ENCODE measurements at regions of chr19 and their contacts with region 1.

Region 1: GRCh38 chr19:55632463-55632834 is 8.1 kb upstream of the ZNF784 start:
- DNase-seq: peak; percentile 44
- ATAC-seq: peak; percentile 57
- H3K4me3 Mint-ChIP-seq: peak overlapping the region; percentile 60
- H3K27ac Mint-ChIP-seq: peak overlapping the region; percentile 37
- H3K4me1 Mint-ChIP-seq: peaks cover 40% of the 10 kb centered on the region
- H3K27me3 Mint-ChIP-seq: no peaks in the 10 kb centered on the region
- CTCF ChIP-seq: no peak

Region 2: DNA sequence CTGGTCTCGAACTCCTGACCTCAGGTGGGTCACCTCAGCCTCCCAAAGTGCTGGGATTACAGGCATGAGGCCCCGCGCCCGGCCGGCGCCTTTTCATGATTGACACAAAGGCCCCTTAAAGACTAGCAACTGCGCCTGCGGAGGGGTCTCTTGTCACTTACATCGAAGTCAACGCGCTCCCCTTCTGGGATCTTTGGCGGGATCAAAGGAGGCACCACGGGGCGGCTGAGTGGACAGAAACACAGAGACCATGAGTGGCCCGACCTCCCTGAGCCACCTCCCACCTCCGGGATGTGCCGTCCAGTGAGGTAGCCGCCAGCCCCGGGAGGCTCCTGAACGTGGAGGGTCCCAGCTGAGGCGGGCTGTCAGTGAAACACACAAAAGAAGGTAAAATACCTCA is 490.8 kb before region 1 on chr19:
- CTCF ChIA-PET with region 1: interaction called, 22 read pairs
- POLR2A ChIA-PET with region 1: interaction called, 3 read pairs
- intact Hi-C with region 1: loop called (anchors 1 kb)
- DNase-seq: no peak
- ATAC-seq: no peak
- H3K4me3 Mint-ChIP-seq: no peak overlapping the region
- H3K27ac Mint-ChIP-seq: no peak overlapping the region
- H3K4me1 Mint-ChIP-seq: peaks cover 6% of the 10 kb centered on the region
- H3K27me3 Mint-ChIP-seq: peaks cover 51% of the 10 kb centered on the region
- CTCF ChIP-seq: no peak

Region 3: DNA sequence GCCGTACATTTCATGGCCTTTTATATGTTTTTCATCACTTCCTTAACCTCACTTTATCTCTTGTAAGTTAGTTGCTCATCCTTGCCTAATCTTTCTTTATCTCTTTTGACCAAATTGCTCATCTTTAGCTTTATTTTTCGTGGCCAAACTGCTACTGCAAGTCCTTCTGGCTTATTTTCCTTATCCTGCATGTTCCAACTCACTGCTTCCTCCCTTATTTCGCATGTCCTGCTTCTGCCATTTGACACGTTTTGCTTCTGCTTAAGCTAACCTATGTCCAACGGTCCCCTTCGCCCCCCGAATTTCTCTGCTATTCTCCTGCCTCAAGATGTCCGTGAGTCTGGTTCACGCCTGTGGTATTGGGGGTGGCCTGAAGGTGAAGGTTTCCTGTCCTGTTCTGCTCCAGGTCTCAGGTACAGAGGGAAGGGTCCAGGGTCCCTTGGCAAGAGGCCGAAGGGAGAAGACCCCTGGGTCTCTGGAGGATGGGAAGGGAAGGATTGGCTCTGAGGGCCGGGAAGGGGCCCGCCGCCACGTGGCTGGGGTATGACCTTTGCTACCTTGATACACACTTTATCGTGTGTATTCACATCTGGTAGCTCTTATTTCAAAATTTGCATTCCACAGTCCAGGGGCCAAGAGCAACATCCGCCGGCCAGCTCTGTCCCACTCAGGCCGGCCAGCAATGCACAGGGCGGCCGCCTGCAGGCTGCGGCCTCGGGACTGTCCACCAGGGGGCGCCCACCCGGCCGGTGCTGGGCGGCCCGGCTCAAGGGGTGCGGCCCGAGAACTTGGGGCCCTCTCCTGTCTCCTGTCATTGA is 165.0 kb before region 1 on chr19:
- CTCF ChIA-PET with region 1: interaction called, 20 read pairs
- POLR2A ChIA-PET with region 1: interaction called, 3 read pairs
- intact Hi-C with region 1: loop called (anchors 1 kb)
- DNase-seq: peak; percentile 73
- ATAC-seq: peak; percentile 99
- H3K4me3 Mint-ChIP-seq: no peak overlapping the region
- H3K27ac Mint-ChIP-seq: no peak overlapping the region
- H3K4me1 Mint-ChIP-seq: peaks cover 3% of the 10 kb centered on the region
- H3K27me3 Mint-ChIP-seq: no peaks in the 10 kb centered on the region
- CTCF ChIP-seq: peak; percentile 96

Region 4: DNA sequence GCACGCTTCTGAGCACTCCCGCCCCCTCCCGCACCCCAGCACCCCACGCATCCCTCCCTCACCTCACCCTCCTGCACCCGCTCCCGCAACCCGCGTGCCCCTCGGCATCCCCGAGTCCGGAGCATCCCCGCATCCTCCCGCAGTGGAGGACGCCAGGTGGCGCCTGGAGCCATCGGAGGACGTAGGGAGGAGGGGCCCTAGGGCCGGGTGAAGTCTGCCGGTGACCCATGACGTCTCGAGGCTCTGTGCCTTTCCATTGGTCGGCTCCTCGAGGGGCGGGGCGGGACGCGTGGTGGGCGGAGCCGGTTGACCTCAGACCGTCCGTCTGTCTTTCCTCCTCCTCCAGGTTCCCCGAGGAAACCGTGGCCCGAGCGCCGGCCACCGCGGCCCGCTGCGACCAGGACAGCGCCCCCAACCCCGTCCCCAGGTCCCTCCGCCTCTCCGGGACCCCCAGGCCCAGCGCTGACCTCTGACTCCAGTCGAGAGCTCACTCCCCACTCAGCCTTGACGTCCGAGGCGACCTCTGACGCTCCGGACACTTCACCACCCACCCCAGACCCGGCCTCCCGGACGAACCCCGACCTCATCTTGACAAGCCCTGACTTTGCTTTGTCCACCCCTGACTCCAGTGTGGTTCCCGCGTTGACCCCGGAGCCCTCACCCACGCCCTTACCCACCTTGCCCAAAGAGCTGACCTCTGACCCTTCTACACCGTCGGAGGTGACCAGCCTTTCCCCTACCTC is 115.4 kb before region 1 on chr19:
- CTCF ChIA-PET with region 1: interaction called, 27 read pairs
- POLR2A ChIA-PET with region 1: interaction called, 14 read pairs
- intact Hi-C with region 1: loop called (anchors 1 kb)
- DNase-seq: peak; percentile 92
- ATAC-seq: peak; percentile 100
- H3K4me3 Mint-ChIP-seq: peak overlapping the region; percentile 76
- H3K27ac Mint-ChIP-seq: peak overlapping the region; percentile 87
- H3K4me1 Mint-ChIP-seq: peaks cover 3% of the 10 kb centered on the region
- H3K27me3 Mint-ChIP-seq: peaks cover 10% of the 10 kb centered on the region
- CTCF ChIP-seq: no peak

Region 5: GRCh38 chr19:55643348-55644176 is 11.1 kb after region 1 on chr19 and contains the start of gene ZNF581:
- CTCF ChIA-PET with region 1: interaction called, 33 read pairs
- POLR2A ChIA-PET with region 1: interaction called, 45 read pairs
- intact Hi-C with region 1: loop called (anchors 1 kb)
- DNase-seq: peak; percentile 84
- ATAC-seq: peak; percentile 51
- H3K4me3 Mint-ChIP-seq: peak within 1 kb of the TSS; percentile 86
- H3K27ac Mint-ChIP-seq: peak within 1 kb of the TSS; percentile 96
- H3K4me1 Mint-ChIP-seq: peaks cover 66% of the 10 kb centered on the region
- H3K27me3 Mint-ChIP-seq: no peaks in the 10 kb centered on the region
- CTCF ChIP-seq: no peak
- total RNA-seq, gene ZNF581: 42.7 and 46.5 TPM in 2 replicates

Region 6: GRCh38 chr19:55766466-55766865 is 134.0 kb after region 1 on chr19:
- CTCF ChIA-PET with region 1: no interaction called
- POLR2A ChIA-PET with region 1: no interaction called
- intact Hi-C with region 1: no loop called
- DNase-seq: no peak
- ATAC-seq: no peak
- H3K4me3 Mint-ChIP-seq: no peak overlapping the region
- H3K27ac Mint-ChIP-seq: no peak overlapping the region
- H3K4me1 Mint-ChIP-seq: no peaks in the 10 kb centered on the region
- H3K27me3 Mint-ChIP-seq: peaks cover 22% of the 10 kb centered on the region
- CTCF ChIP-seq: no peak

Region 7: DNA sequence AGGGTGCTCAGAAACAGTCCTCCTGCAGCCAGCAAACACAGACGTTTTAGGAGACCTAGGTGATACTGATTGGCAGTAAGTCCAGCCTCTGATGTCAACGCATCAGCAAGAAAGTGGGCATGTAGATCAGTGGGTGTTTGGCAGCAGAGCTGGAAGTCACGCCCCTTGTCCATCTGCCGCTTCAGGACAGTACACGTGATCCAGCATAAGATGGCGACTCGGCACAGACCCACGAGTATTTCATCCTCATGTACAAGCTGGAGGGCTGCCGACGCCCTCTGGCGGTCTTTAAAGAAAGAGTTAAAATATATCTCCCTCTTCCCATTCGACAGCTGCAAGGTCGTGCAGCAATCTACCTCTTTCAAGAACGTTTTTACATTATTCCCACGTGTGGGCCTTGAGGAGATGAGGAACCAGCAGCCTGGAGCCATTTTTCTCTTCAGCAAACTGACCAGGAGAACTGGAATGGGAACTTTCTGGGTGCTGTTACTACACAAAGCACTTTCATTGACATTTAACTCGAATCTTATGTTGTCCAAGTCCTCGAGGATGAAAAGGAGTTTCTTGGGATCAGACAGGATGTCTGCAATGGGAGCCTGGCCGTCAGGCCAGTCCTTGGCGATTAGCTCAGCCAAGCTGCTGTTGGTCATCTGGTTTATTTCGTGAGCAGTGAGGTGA is 177.1 kb after region 1 on chr19:
- CTCF ChIA-PET with region 1: interaction called, 90 read pairs
- POLR2A ChIA-PET with region 1: interaction called, 12 read pairs
- intact Hi-C with region 1: no loop called
- DNase-seq: peak; percentile 19
- ATAC-seq: peak; percentile 97
- H3K4me3 Mint-ChIP-seq: peak overlapping the region; percentile 52
- H3K27ac Mint-ChIP-seq: peak overlapping the region; percentile 27
- H3K4me1 Mint-ChIP-seq: peaks cover 7% of the 10 kb centered on the region
- H3K27me3 Mint-ChIP-seq: peaks cover 4% of the 10 kb centered on the region
- CTCF ChIP-seq: no peak

Measured in activated B cell treated with CpG ODN at 0.5 μM for 24 hours (primary cell).